Transverse colon (tissue), 4 donors: ENCODE measurements at regions of chr2 and their contacts with region 1.

Region 1: GRCh38 chr2:236128321-236128720 is 39.9 kb downstream of the GBX2 start:
- DNase-seq: no peak
- H3K4me3 ChIP-seq: no peak overlapping the region
- H3K27ac ChIP-seq: no peak overlapping the region
- H3K4me1 ChIP-seq: no peaks in the 10 kb centered on the region
- H3K27me3 ChIP-seq: no peaks in the 10 kb centered on the region
- CTCF ChIP-seq: no peak
- EP300 ChIP-seq: no peak
- POLR2A ChIP-seq: no peak

Region 2: GRCh38 chr2:235825946-235826345 is 302.4 kb before region 1 on chr2:
- in situ Hi-C with region 1: no loop called
- intact Hi-C with region 1: loop called (anchors 2 kb)
- DNase-seq: no peak
- H3K4me3 ChIP-seq: no peak overlapping the region
- H3K27ac ChIP-seq: no peak overlapping the region
- H3K4me1 ChIP-seq: no peaks in the 10 kb centered on the region
- H3K27me3 ChIP-seq: no peaks in the 10 kb centered on the region
- CTCF ChIP-seq: no peak
- EP300 ChIP-seq: no peak
- POLR2A ChIP-seq: no peak

Region 3: DNA sequence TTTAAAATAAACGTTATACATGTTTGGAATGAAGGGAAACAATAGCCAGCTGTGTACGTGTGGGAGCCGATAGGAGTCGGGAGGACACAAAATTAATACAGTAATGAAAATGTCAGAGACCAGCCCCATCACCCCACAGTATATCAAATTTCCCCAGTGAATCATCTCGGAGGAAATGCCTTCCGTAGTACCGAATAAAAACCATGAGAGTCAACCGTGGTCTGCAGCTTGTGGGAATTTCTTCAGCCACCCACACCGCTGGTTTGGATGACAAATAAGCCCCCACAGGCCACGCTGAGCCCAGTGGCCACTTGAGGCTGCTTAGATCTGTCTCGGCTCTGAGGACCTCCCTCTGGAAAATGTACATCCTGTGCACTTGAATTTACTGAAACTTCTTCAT is 1151.9 kb after region 1 on chr2:
- in situ Hi-C with region 1: no loop called
- intact Hi-C with region 1: no loop called
- DNase-seq: no peak
- H3K4me3 ChIP-seq: no peak overlapping the region
- H3K27ac ChIP-seq: peak overlapping the region; percentile 64 to 84 (median 70)
- H3K4me1 ChIP-seq: peaks cover 4 to 17% (median 7%) of the 10 kb centered on the region in 4 donors
- H3K27me3 ChIP-seq: no peaks in the 10 kb centered on the region
- CTCF ChIP-seq: no peak
- EP300 ChIP-seq: no peak
- POLR2A ChIP-seq: no peak